Caco-2 (cell line): ENCODE measurements at regions of chr11 and their contacts with region 1.

Region 1: DNA sequence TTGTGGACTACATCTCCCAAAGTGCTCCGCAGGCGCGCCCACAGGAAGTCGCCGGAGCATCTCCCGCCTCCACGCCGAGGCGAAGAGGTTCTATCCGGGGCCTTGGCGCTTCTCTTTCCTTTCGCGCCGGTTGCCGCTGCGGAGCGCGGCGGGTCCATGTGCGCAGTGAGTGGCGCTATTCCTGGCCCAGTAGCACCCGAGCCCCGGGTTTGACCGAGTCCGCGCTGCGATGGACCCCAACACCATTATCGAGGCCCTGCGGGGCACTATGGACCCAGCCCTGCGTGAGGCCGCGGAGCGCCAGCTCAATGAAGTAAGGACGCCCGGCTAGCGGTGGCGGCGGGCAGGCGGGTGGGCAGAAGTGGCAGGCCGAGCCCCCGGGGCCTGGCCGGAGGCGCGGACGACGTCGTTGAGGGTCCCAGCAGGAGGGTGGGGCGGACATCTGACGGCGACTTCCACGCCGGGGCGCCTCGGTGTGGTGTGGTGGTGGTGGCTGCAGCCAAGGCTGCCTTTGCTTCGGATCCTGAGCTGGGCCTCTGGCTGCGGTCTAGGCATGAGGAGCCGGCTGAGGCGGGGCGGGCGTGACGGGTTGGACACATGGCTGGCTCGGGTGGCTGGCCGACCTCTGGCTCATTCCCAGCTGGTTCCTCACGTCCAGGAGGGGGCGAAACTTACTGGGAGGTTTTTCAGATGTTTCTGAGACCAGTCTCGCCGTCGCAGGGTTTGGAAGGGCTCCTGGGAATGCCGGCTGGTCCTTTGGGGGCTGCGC is at the start of gene IPO7:
- DNase-seq: peak; percentile 92 to 93
- H3K4me3 ChIP-seq: peak within 1 kb of the TSS; percentile 90
- H3K4me3 Mint-ChIP-seq: peak within 1 kb of the TSS; percentile 94
- H3K27ac Mint-ChIP-seq: peak within 1 kb of the TSS; percentile 98
- H3K4me1 ChIP-seq: peaks cover 30% of the 10 kb centered on the region
- H3K4me1 Mint-ChIP-seq: peaks cover 29% of the 10 kb centered on the region
- H3K27me3 ChIP-seq: no peaks in the 10 kb centered on the region
- H3K27me3 Mint-ChIP-seq: no peaks in the 10 kb centered on the region
- CTCF ChIP-seq: peak; percentile 20 to 44
- total RNA-seq, gene IPO7: 196 and 199 TPM in 2 replicates

Region 2: GRCh38 chr11:9203691-9204311 is 180.9 kb before region 1 on chr11:
- CTCF ChIA-PET with region 1: interaction called, 3 read pairs
- POLR2A ChIA-PET with region 1: interaction called, 3 read pairs
- intact Hi-C with region 1: loop called (anchors 10 kb)
- DNase-seq: peak in 1 of 2 experiments; percentile 48
- H3K4me3 ChIP-seq: no peak overlapping the region
- H3K4me3 Mint-ChIP-seq: no peak overlapping the region
- H3K27ac Mint-ChIP-seq: no peak overlapping the region
- H3K4me1 ChIP-seq: peaks cover 8% of the 10 kb centered on the region; the same call in 1 of the 2 replicates
- H3K4me1 Mint-ChIP-seq: peaks cover 2% of the 10 kb centered on the region
- H3K27me3 ChIP-seq: no peaks in the 10 kb centered on the region
- H3K27me3 Mint-ChIP-seq: no peaks in the 10 kb centered on the region
- CTCF ChIP-seq: peak; percentile 45 to 53

Region 3: GRCh38 chr11:9314291-9315036 is 70.3 kb before region 1 on chr11 and contains the start of gene TMEM41B:
- CTCF ChIA-PET with region 1: interaction called, 4 read pairs
- POLR2A ChIA-PET with region 1: interaction called, 8 read pairs
- intact Hi-C with region 1: loop called (anchors 1 kb)
- DNase-seq: peak; percentile 98 to 99
- H3K4me3 ChIP-seq: peak within 1 kb of the TSS; percentile 98
- H3K4me3 Mint-ChIP-seq: peak within 1 kb of the TSS; percentile 87
- H3K27ac Mint-ChIP-seq: peak within 1 kb of the TSS; percentile 99
- H3K4me1 ChIP-seq: peaks cover 37% of the 10 kb centered on the region
- H3K4me1 Mint-ChIP-seq: peaks cover 24% of the 10 kb centered on the region
- H3K27me3 ChIP-seq: no peaks in the 10 kb centered on the region
- H3K27me3 Mint-ChIP-seq: no peaks in the 10 kb centered on the region
- CTCF ChIP-seq: peak in 1 of 2 experiments; percentile 16
- total RNA-seq, gene TMEM41B: 103 and 110 TPM in 2 replicates

Region 4: GRCh38 chr11:9739123-9739894 is 354.6 kb after region 1 on chr11:
- CTCF ChIA-PET with region 1: no interaction called
- POLR2A ChIA-PET with region 1: no interaction called
- intact Hi-C with region 1: no loop called
- DNase-seq: no peak
- H3K4me3 ChIP-seq: no peak overlapping the region
- H3K4me3 Mint-ChIP-seq: no peak overlapping the region
- H3K27ac Mint-ChIP-seq: peak overlapping the region; percentile 63
- H3K4me1 ChIP-seq: peaks cover 27% of the 10 kb centered on the region
- H3K4me1 Mint-ChIP-seq: peaks cover 32% of the 10 kb centered on the region
- H3K27me3 ChIP-seq: no peaks in the 10 kb centered on the region
- H3K27me3 Mint-ChIP-seq: no peaks in the 10 kb centered on the region
- CTCF ChIP-seq: no peak